PC-9 (cell line): ENCODE measurements at regions of chr3 and their contacts with region 1.

Region 1: GRCh38 chr3:160754855-160755747 is 930 bp upstream of the PPM1L start:
- DNase-seq: peak; percentile 82 to 92
- H3K4me3 ChIP-seq: peak overlapping the region; percentile 71
- H3K27ac ChIP-seq: peak overlapping the region; percentile 68
- H3K4me1 ChIP-seq: peaks cover 23% of the 10 kb centered on the region
- H3K27me3 ChIP-seq: no peaks in the 10 kb centered on the region
- CTCF ChIP-seq: no peak

Region 2: GRCh38 chr3:159872374-159873109 is 882.6 kb before region 1 on chr3:
- CTCF ChIA-PET with region 1: no interaction called
- POLR2A ChIA-PET with region 1: no interaction called
- intact Hi-C with region 1: no loop called
- DNase-seq: peak; percentile 56 to 96
- H3K4me3 ChIP-seq: no peak overlapping the region
- H3K27ac ChIP-seq: peak overlapping the region; percentile 82
- H3K4me1 ChIP-seq: peaks cover 23% of the 10 kb centered on the region
- H3K27me3 ChIP-seq: no peaks in the 10 kb centered on the region
- CTCF ChIP-seq: peak; percentile 54; the same call in 1 of the 2 replicates

Region 3: GRCh38 chr3:160417311-160417710 is 337.8 kb before region 1 on chr3:
- CTCF ChIA-PET with region 1: no interaction called
- POLR2A ChIA-PET with region 1: no interaction called
- intact Hi-C with region 1: no loop called
- DNase-seq: no peak
- H3K4me3 ChIP-seq: no peak overlapping the region
- H3K27ac ChIP-seq: no peak overlapping the region
- H3K4me1 ChIP-seq: no peaks in the 10 kb centered on the region
- H3K27me3 ChIP-seq: no peaks in the 10 kb centered on the region
- CTCF ChIP-seq: no peak

Region 4: GRCh38 chr3:160565442-160566403 is 189.4 kb before region 1 on chr3 and contains the start of gene KPNA4:
- CTCF ChIA-PET with region 1: no interaction called
- POLR2A ChIA-PET with region 1: no interaction called
- intact Hi-C with region 1: loop called (anchors 2 kb)
- DNase-seq: peak; percentile 94 to 99
- H3K4me3 ChIP-seq: peak within 1 kb of the TSS; percentile 86
- H3K27ac ChIP-seq: peak within 1 kb of the TSS; percentile 98
- H3K4me1 ChIP-seq: peaks cover 40% of the 10 kb centered on the region
- H3K27me3 ChIP-seq: no peaks in the 10 kb centered on the region
- CTCF ChIP-seq: no peak
- total RNA-seq, gene KPNA4: 49.2 and 61.0 TPM in 2 replicates

Region 5: DNA sequence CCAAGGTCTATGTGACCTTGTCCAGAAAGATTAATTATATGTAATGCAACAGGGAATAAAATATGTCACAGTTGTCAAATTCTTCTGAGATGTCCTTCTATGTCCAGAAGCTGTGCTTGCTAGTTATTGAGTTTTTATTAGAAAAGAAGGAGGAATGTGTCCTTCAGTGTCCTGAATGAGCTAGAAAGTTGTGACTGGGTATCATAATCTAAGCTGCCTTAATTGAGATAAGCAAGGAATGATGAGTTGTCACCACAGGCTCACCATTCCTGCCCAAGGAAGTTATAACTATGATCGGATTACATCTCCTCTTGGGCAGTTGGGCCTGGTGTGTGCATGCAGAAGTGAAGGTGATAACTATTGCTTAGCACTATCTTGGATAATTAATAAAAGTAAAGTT is 56.3 kb before region 1 on chr3:
- CTCF ChIA-PET with region 1: no interaction called
- POLR2A ChIA-PET with region 1: interaction called, 10 read pairs
- intact Hi-C with region 1: no loop called
- DNase-seq: no peak
- H3K4me3 ChIP-seq: no peak overlapping the region
- H3K27ac ChIP-seq: no peak overlapping the region
- H3K4me1 ChIP-seq: peaks cover 11% of the 10 kb centered on the region
- H3K27me3 ChIP-seq: no peaks in the 10 kb centered on the region
- CTCF ChIP-seq: no peak

Region 6: GRCh38 chr3:160720123-160720746 is 34.9 kb before region 1 on chr3:
- CTCF ChIA-PET with region 1: no interaction called
- POLR2A ChIA-PET with region 1: no interaction called
- intact Hi-C with region 1: no loop called
- DNase-seq: no peak
- H3K4me3 ChIP-seq: no peak overlapping the region
- H3K27ac ChIP-seq: no peak overlapping the region
- H3K4me1 ChIP-seq: peaks cover 6% of the 10 kb centered on the region; the same call in 1 of the 2 replicates
- H3K27me3 ChIP-seq: no peaks in the 10 kb centered on the region
- CTCF ChIP-seq: no peak; the same call in 1 of the 2 replicates

Region 7: DNA sequence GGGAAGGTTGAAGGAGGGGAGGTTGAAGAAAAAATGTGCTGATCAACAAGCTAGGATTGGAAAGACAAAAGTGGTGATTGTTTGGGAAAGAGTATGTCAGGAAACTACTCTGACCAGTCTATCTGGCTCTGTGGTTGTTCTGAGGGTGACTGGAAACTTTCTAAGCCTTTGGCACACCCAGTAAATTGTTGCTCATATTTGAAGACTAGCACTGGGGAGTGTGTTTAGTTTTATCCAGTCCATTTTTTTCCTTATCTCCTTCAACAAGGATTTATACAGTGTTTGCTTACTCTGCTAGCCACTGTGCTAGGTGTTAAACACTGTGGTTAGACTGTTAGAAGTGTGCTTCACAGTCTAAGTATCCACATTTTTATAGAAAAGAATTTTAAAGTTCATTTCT is 29.7 kb after region 1 on chr3:
- CTCF ChIA-PET with region 1: no interaction called
- POLR2A ChIA-PET with region 1: no interaction called
- intact Hi-C with region 1: loop called (anchors 2 kb)
- DNase-seq: peak; percentile 46 to 93
- H3K4me3 ChIP-seq: peak overlapping the region; percentile 28; the same call in 1 of the 2 replicates
- H3K27ac ChIP-seq: peak overlapping the region; percentile 71
- H3K4me1 ChIP-seq: peaks cover 23% of the 10 kb centered on the region
- H3K27me3 ChIP-seq: no peaks in the 10 kb centered on the region
- CTCF ChIP-seq: no peak

Region 8: DNA sequence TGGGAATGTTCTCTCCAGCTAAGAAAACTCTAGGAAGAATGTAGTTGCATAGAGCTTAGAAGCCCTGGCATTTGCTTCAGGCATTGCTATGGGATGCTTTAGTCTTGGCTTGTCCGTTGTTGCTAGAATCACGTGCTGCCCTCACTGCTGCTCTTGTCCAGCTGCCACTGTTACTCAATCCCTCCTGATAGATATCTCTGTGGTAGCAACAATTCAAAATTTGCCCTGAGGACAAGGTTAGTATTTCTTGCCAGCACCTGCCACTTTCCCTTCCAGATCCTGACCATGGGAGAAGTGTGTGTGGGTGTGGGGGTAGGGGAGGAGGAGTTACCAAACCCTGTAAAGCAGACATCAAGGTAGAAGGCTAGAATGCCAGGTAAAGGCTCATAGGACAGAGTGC is 114.7 kb after region 1 on chr3:
- CTCF ChIA-PET with region 1: no interaction called
- POLR2A ChIA-PET with region 1: no interaction called
- intact Hi-C with region 1: loop called (anchors 1 kb)
- DNase-seq: peak; percentile 73 to 85
- H3K4me3 ChIP-seq: peak overlapping the region; percentile 24; the same call in 1 of the 2 replicates
- H3K27ac ChIP-seq: no peak overlapping the region
- H3K4me1 ChIP-seq: peaks cover 12% of the 10 kb centered on the region
- H3K27me3 ChIP-seq: no peaks in the 10 kb centered on the region
- CTCF ChIP-seq: no peak

Region 9: GRCh38 chr3:160921020-160921635 is 166.0 kb after region 1 on chr3:
- CTCF ChIA-PET with region 1: no interaction called
- POLR2A ChIA-PET with region 1: interaction called, 6 read pairs
- intact Hi-C with region 1: loop called (anchors 1 kb)
- DNase-seq: peak in 1 of 2 experiments; percentile 28
- H3K4me3 ChIP-seq: no peak overlapping the region
- H3K27ac ChIP-seq: no peak overlapping the region
- H3K4me1 ChIP-seq: no peaks in the 10 kb centered on the region
- H3K27me3 ChIP-seq: no peaks in the 10 kb centered on the region
- CTCF ChIP-seq: peak; percentile 91